HepG2 (cell line): ENCODE measurements at regions of chr6 and their contacts with region 1.

Region 1: DNA sequence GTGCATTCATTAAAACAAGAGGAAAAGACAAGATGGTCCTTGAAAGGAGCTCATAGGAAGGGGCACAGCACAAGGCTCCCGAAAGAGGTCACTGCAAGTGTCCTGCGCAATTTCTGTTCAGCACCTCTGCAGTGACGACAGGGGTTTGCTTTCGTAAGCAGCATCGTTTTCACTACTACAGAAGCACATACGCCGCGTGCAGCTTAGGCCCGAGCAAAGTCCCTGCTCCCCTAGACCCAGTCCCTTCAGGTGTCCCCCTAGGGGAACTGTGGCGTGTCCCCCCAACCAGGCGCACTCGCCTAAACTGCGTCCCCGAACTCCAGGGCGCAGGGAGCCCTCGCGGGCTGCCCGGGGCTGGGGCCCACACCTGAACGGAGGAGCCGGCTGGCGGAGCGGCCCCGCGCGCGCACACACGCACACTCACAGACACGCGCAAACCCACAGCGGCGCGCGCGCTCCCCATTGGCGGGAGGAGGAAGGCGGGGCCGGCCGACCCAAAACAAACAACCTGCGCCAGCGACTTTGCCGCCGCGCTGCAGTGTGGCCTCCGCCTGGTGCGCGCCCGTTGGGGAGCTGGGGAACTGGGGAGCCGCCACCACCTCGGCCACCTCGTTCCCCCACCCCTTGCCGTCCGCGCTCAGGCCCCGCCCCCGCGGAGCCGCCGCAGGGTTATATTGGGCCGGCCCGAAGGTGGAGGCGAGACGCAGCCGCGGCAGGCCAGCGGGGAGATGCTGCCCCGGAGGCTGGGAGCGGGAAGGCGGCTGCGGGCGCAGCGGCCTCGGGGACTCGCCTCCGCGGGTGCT is at the start of gene FOXQ1:
- DNase-seq: peak; percentile 95
- ATAC-seq: peak; percentile 79
- H3K4me3 ChIP-seq: peak within 1 kb of the TSS; percentile 98 to 99 (median 98)
- H3K27ac ChIP-seq: peak within 1 kb of the TSS; percentile 97
- H3K4me1 ChIP-seq: peaks cover 46% of the 10 kb centered on the region
- H3K27me3 ChIP-seq: no peaks in the 10 kb centered on the region; a peak in 1 of 5 replicates
- CTCF ChIP-seq: peak; percentile 50
- EP300 ChIP-seq: peak; percentile 56; a peak in 3 of 4 replicates
- POLR2A ChIP-seq: peak in 1 of 2 experiments; percentile 99; a peak in 2 of 4 replicates
- RAD21 ChIP-seq: peak; percentile 84
- total RNA-seq, gene FOXQ1: 39.2 and 39.8 TPM in 2 replicates

Region 2: DNA sequence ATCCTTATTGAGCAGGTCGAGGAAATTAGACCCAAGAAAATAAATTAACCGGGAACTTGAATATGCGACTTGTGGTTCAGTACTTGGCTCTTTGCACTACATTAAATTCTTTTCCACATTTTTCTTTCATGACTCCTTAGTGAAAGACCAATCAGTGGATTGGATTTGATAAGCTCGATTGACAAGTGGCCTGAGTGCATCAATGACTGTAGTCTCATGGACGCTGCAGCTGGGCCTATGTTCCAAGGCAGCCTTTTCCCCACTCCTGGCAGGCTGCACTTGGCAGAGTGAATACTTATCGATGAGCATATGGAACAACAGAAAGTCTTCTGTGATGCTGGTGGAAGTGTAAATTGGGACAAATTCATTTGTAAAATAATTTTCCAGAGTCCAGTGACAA is 407.8 kb before region 1 on chr6:
- CTCF ChIA-PET with region 1: no interaction called
- POLR2A ChIA-PET with region 1: interaction called, 37 read pairs
- in situ Hi-C with region 1: no loop called
- intact Hi-C with region 1: no loop called
- DNase-seq: no peak
- ATAC-seq: no peak
- H3K4me3 ChIP-seq: no peak overlapping the region
- H3K27ac ChIP-seq: no peak overlapping the region
- H3K4me1 ChIP-seq: peaks cover 30% of the 10 kb centered on the region
- H3K27me3 ChIP-seq: peaks cover 2 to 15% of the 10 kb centered on the region in 2 experiments; a peak in 2 of 5 replicates
- CTCF ChIP-seq: no peak
- EP300 ChIP-seq: no peak
- POLR2A ChIP-seq: no peak
- RAD21 ChIP-seq: no peak

Region 3: GRCh38 chr6:1110164-1110563 is 201.4 kb before region 1 on chr6:
- CTCF ChIA-PET with region 1: no interaction called
- POLR2A ChIA-PET with region 1: interaction called, 10 read pairs
- in situ Hi-C with region 1: no loop called
- intact Hi-C with region 1: no loop called
- DNase-seq: peak; percentile 49
- ATAC-seq: peak; percentile 55
- H3K4me3 ChIP-seq: no peak overlapping the region
- H3K27ac ChIP-seq: no peak overlapping the region
- H3K4me1 ChIP-seq: no peaks in the 10 kb centered on the region
- H3K27me3 ChIP-seq: no peaks in the 10 kb centered on the region
- CTCF ChIP-seq: peak; percentile 61
- EP300 ChIP-seq: no peak
- POLR2A ChIP-seq: no peak
- RAD21 ChIP-seq: 0 out of 2 replicates have a peak, but pooled peaks have one; percentile 11

Region 4: GRCh38 chr6:1179571-1180459 is 131.8 kb before region 1 on chr6:
- CTCF ChIA-PET with region 1: no interaction called
- POLR2A ChIA-PET with region 1: interaction called, 29 read pairs
- in situ Hi-C with region 1: no loop called
- intact Hi-C with region 1: loop called (anchors 5 kb)
- DNase-seq: no peak
- ATAC-seq: no peak
- H3K4me3 ChIP-seq: no peak overlapping the region
- H3K27ac ChIP-seq: no peak overlapping the region
- H3K4me1 ChIP-seq: peaks cover 56% of the 10 kb centered on the region
- H3K27me3 ChIP-seq: no peaks in the 10 kb centered on the region
- CTCF ChIP-seq: no peak
- EP300 ChIP-seq: no peak
- POLR2A ChIP-seq: no peak
- RAD21 ChIP-seq: no peak

Region 5: DNA sequence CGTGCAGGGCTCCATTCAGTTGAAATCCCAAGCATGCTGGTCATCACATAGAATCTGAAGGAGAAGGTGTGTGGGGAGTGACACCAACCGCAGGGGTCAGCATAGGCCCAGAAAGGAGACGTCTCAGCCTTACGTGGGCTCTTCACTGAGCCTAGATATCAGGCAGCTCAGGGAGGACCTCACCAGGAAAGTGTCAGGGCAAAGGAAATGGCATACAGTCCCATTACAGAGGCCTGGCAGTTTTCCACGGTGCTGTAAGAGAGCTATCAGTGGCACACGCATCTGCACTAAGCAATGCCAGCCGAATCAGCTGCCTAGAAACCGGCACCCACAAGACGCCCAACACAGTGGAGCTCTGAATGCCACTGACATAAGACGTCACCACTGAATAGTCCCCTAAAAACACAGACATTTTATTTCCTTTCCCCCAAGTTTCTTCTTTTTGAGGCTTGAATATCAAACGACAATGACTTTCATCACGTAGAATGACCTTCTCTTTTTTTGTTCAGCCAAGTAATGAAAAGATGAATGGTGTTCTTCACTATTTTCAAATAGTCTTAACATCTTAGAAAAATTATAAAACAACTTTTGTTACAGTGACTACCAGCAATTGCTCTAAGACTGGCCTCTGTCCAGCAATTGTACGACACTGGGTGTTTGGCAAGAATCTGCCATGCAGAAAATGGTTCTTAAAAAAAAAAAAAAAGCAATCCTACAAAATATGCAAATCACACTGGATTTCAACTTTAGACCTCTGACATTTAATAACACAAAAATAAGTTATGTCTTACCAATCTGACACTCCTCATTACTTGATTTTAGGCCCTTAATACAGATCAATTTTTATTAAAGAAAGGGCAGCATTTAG is 88.6 kb before region 1 on chr6:
- CTCF ChIA-PET with region 1: no interaction called
- POLR2A ChIA-PET with region 1: interaction called, 354 read pairs
- in situ Hi-C with region 1: no loop called
- intact Hi-C with region 1: loop called (anchors 1 kb)
- DNase-seq: no peak
- ATAC-seq: no peak
- H3K4me3 ChIP-seq: no peak overlapping the region
- H3K27ac ChIP-seq: no peak overlapping the region
- H3K4me1 ChIP-seq: peaks cover 59% of the 10 kb centered on the region
- H3K27me3 ChIP-seq: no peaks in the 10 kb centered on the region; a peak in 1 of 5 replicates
- CTCF ChIP-seq: no peak
- EP300 ChIP-seq: no peak
- POLR2A ChIP-seq: no peak
- RAD21 ChIP-seq: no peak

Region 6: GRCh38 chr6:1278061-1278720 is 33.4 kb before region 1 on chr6:
- CTCF ChIA-PET with region 1: no interaction called
- POLR2A ChIA-PET with region 1: interaction called, 26 read pairs
- in situ Hi-C with region 1: no loop called
- intact Hi-C with region 1: no loop called
- DNase-seq: peak; percentile 38
- ATAC-seq: no peak
- H3K4me3 ChIP-seq: no peak overlapping the region
- H3K27ac ChIP-seq: no peak overlapping the region
- H3K4me1 ChIP-seq: peaks cover 34% of the 10 kb centered on the region
- H3K27me3 ChIP-seq: no peaks in the 10 kb centered on the region
- CTCF ChIP-seq: no peak
- EP300 ChIP-seq: no peak
- POLR2A ChIP-seq: no peak
- RAD21 ChIP-seq: no peak

Region 7: GRCh38 chr6:1335367-1336037 is 23.9 kb after region 1 on chr6:
- CTCF ChIA-PET with region 1: interaction called, 22 read pairs
- POLR2A ChIA-PET with region 1: interaction called, 284 read pairs
- in situ Hi-C with region 1: no loop called
- intact Hi-C with region 1: loop called (anchors 1 kb)
- DNase-seq: peak; percentile 98
- ATAC-seq: peak; percentile 93
- H3K4me3 ChIP-seq: peak overlapping the region; percentile 20 to 65 (median 31)
- H3K27ac ChIP-seq: peak overlapping the region; percentile 73
- H3K4me1 ChIP-seq: peaks cover 48% of the 10 kb centered on the region
- H3K27me3 ChIP-seq: peaks cover 0 to 10% of the 10 kb centered on the region in 2 experiments; a peak in 1 of 5 replicates
- CTCF ChIP-seq: peak; percentile 41
- EP300 ChIP-seq: peak; percentile 89 to 93
- POLR2A ChIP-seq: peak in 1 of 2 experiments; percentile 52; a peak in 3 of 4 replicates
- RAD21 ChIP-seq: peak; percentile 52; the same call in 1 of the 2 replicates

Region 8: GRCh38 chr6:1348675-1349074 is 37.1 kb after region 1 on chr6:
- CTCF ChIA-PET with region 1: no interaction called
- POLR2A ChIA-PET with region 1: no interaction called
- in situ Hi-C with region 1: no loop called
- intact Hi-C with region 1: no loop called
- DNase-seq: no peak
- ATAC-seq: no peak
- H3K4me3 ChIP-seq: no peak overlapping the region
- H3K27ac ChIP-seq: no peak overlapping the region
- H3K4me1 ChIP-seq: no peaks in the 10 kb centered on the region
- H3K27me3 ChIP-seq: peaks cover 3 to 4% of the 10 kb centered on the region in 2 experiments; a peak in 2 of 5 replicates
- CTCF ChIP-seq: no peak
- EP300 ChIP-seq: no peak
- POLR2A ChIP-seq: no peak
- RAD21 ChIP-seq: no peak

Region 9: GRCh38 chr6:2196079-2196679 is 884.6 kb after region 1 on chr6:
- CTCF ChIA-PET with region 1: no interaction called
- POLR2A ChIA-PET with region 1: no interaction called
- in situ Hi-C with region 1: no loop called
- intact Hi-C with region 1: no loop called
- DNase-seq: peak; percentile 40
- ATAC-seq: peak; percentile 71
- H3K4me3 ChIP-seq: no peak overlapping the region
- H3K27ac ChIP-seq: no peak overlapping the region
- H3K4me1 ChIP-seq: peaks cover 9% of the 10 kb centered on the region; the same call in 1 of the 2 replicates
- H3K27me3 ChIP-seq: no peaks in the 10 kb centered on the region
- CTCF ChIP-seq: peak; percentile 72
- EP300 ChIP-seq: no peak
- POLR2A ChIP-seq: no peak
- RAD21 ChIP-seq: 0 out of 2 replicates have a peak, but pooled peaks have one; percentile 24